GM10248 (cell line): ENCODE measurements at regions of chr18 and their contacts with region 1.

Region 1: DNA sequence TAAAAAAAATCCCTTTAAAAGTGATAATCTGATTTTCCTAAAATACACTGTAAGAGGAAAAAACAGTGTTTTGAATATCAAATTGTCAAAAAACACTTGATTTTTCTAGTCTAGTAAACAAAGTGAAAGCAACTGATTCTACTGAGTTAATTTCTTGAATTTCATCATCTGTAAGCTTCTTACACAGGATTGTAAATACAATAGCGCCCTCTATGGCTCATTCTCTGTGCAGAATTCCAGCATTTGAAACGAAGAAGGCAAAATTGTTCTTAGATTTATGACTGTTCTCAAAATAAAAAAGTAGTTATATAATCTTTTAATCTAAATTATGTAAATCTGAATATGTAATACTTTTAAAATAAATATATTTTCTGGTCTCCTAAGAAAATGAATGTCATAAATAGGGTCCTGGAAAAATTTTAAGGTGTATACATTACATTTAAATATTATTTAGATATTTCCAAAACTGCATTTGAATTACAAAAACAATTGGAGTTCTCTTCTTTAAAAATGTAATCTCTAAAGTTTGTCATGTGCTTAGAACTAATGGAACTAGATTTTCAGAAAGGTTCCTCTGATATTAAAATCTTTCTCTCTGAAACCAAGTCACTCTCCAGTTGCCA is 176.9 kb upstream of the MC4R start:
- DNase-seq: peak; percentile 30
- CTCF ChIP-seq: peak; percentile 79

Region 2: DNA sequence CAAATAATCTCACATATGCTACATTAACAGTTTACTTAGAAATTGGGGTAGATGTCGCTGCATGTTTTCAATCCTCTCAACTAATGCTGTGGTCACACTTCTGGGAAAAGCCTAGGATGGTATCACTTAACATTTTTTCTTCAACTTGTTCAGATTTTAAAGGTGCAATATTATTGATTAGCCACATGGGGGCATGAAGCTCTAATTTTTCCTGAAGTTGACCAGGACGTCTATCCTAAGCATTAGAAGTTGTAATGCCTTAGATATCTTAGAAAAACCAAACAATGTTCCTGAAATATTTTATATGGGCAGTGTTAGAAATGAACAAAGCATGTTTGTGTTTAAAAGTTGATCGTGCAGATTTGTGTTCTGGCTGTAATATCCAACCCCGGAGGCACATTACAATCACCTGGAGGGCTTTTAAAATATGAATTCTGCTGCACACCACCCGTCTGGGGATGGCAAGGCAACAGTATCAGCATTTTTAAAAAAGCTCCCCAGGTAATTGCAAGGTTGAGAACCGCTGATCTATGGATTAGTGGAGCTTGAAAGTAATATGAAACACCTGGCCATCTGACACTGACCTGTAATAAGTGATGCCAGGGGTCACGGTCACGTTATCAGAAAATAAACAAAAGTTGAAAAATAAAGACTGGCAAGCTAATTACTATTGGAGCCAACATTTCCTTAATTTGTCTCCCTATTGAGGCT is 1089.9 kb before region 1 on chr18:
- CTCF ChIA-PET with region 1: interaction called, 15 read pairs
- POLR2A ChIA-PET with region 1: no interaction called
- DNase-seq: peak; percentile 40
- CTCF ChIP-seq: peak; percentile 54

Region 3: DNA sequence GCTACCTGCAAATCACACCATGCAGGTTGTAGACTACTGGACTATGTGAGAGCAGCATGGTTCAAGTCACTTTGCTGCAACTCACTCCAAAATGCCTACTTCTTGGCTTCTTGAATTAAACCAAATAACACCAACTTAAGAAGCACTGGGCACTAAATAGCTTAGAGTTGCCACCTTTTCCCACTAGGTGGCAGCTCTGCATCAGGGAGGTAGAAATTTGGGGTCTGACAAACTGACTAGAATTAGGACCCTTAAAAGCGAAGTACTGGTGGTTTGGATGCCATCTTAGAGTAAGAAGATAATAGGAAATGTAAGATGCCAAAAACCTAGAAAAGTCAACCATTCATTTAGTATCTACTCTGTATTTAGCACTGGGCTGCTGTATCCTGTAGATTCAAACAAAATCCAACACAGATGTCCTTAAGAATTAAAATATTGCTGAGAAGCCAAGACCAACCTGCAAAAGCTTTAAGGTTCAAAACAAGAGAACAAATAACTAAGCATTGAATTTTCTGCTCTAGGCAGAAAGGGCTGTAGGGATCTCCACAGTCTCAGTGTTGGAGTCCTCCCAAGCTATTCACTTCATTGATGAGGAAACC is 917.8 kb before region 1 on chr18:
- CTCF ChIA-PET with region 1: interaction called, 10 read pairs
- POLR2A ChIA-PET with region 1: no interaction called
- DNase-seq: peak; percentile 21
- CTCF ChIP-seq: peak; percentile 61

Region 4: DNA sequence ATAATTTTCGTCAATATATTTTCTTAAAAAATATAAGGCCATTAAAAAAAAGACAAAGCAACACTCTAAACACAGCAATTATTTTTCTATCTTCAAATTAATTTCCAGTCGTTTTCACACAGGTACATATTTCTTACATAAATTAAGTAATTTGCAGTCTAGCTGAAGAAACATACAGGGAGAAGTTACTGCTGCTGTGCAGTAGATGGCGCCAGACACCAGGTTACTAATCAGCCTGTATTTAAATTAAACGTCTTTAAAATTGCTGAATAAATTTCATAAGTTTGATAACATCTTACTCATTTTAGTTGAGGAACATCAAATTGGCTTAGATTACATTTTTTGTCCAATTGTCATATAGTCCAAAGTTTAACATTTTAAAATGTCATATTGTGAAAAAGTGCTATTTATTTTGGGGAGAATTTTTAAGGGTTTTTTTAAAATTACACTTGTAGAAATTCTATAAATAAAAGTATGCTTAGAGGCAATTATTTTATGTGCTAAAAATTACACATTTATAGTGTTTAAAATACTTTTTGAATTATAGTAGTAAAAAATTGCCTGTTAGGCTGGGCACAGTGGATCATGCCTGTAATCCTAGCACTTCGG is 561.2 kb before region 1 on chr18:
- CTCF ChIA-PET with region 1: interaction called, 56 read pairs
- POLR2A ChIA-PET with region 1: no interaction called
- DNase-seq: peak; percentile 47
- CTCF ChIP-seq: peak; percentile 88

Region 5: GRCh38 chr18:59996370-59996966 is 553.0 kb before region 1 on chr18:
- CTCF ChIA-PET with region 1: interaction called, 56 read pairs
- POLR2A ChIA-PET with region 1: no interaction called
- DNase-seq: peak; percentile 30
- CTCF ChIP-seq: peak; percentile 67

Region 6: DNA sequence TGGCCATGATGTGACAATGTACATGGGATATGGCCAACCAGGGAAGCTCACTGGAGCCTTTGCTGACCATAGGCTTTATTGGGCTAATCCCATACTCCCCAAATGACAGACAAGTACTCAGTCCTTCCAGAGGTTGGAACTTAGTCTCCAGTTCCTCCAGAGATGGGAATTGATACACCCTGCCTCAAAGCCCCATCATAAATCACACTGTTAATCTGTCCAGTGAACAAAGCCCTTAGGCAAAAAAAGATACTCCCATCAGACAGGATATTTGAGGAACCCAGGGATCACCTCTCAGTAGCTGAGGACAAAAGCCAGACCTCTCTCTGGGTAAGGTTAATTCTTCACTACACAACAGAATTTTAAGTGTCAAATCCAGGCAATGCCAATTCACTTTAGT is 536.3 kb after region 1 on chr18:
- CTCF ChIA-PET with region 1: no interaction called
- POLR2A ChIA-PET with region 1: no interaction called
- DNase-seq: no peak
- CTCF ChIP-seq: no peak

Region 7: DNA sequence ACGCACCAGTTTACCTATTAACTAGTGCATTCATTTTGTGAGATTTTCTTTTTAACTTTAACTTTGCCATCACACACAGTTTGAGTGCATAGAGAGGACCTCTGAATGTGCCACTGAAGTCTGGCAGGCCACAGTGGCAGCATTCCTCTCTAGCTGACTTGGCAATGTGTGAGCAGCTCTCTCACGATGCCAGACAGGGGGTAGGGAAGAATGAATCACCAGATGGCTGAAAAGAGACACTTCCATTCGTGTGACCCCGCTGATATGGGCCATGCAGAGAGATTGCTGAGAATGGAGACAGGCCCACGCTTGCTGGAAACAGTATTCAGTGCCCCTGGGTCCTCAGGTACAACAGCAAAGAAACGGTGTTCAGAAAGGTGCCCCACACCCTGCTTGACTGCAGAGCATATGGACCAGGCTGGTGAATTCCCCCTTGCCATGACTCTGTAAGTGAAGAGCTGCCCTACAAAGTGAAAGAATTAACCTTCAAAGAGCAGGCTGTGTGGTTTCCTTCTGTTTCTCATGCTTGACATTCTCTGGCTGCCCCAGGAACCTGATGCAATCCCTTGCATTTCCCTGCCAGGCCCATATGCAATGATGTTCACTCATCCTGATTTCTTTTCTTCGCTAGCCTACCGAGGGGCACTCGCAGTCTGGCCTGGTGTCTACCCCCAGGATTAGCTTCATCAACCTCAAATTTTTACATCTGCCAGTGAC is 1019.9 kb after region 1 on chr18:
- CTCF ChIA-PET with region 1: no interaction called
- POLR2A ChIA-PET with region 1: no interaction called
- DNase-seq: no peak
- CTCF ChIP-seq: no peak